Activated CD8-positive, alpha-beta T cell treated with anti-CD3 and anti-CD28 coated beads for 36 hours (primary cell): ENCODE measurements at regions of chr1 and their contacts with region 1.

Region 1: DNA sequence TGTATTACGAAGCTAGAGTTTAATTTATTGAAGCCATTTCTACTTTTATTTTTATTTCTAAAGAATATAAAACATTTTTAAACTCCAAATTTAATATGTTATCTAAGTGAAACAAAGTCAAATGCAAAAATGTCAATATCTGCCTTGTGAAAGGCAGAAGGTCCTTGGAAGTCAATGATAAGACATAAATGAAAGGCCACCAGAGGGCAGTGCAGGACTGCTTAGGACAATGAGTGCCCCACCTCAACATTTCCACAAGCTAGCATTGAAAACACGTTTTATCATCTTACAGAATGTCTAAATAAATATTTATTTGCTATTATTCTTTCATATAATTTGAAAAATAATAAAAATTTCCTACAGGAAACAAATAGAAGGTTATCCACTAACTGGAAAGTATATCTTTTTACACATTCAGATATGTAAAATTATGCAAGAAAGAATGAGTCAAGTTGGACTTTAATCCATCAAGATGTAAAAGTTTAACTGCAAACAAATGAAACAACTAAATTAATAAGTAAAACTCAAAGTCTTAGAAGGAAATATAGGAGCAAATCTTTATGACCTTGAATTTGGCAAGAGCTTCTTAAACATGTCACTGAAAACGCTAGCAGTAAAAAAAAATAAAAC is 140.1 kb upstream of the FMN2 start:
- DNase-seq: peak; percentile 82
- ATAC-seq: no peak
- H3K4me3 Mint-ChIP-seq: no peak overlapping the region
- H3K27ac Mint-ChIP-seq: no peak overlapping the region
- H3K4me1 Mint-ChIP-seq: no peaks in the 10 kb centered on the region
- H3K27me3 Mint-ChIP-seq: no peaks in the 10 kb centered on the region
- CTCF ChIP-seq: peak; percentile 85

Region 2: GRCh38 chr1:239882967-239883366 is 68.7 kb before region 1 on chr1:
- CTCF ChIA-PET with region 1: no interaction called
- POLR2A ChIA-PET with region 1: no interaction called
- intact Hi-C with region 1: no loop called
- DNase-seq: no peak
- ATAC-seq: no peak
- H3K4me3 Mint-ChIP-seq: no peak overlapping the region
- H3K27ac Mint-ChIP-seq: no peak overlapping the region
- H3K4me1 Mint-ChIP-seq: no peaks in the 10 kb centered on the region
- H3K27me3 Mint-ChIP-seq: no peaks in the 10 kb centered on the region
- CTCF ChIP-seq: no peak

Region 3: DNA sequence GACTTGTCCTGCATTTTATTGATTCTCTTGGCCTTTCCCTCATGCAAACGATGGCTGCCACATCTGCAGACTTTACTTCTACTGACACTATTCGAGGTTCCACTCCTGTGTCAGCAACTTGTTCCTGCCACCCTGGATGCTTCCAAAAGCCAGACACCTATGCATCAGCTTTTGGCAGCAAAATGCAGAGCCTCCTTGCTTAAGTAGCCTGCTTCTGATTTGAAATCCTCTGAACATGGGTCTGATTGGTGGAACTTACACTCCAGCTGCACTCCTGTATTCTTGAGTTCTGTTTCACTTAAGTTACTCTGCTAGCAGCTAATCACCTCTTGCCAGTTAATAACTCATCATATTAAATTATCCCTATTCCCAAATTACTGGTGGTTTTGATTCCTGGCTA is 12.0 kb before region 1 on chr1:
- CTCF ChIA-PET with region 1: interaction called, 14 read pairs
- POLR2A ChIA-PET with region 1: no interaction called
- intact Hi-C with region 1: no loop called
- DNase-seq: no peak
- ATAC-seq: no peak
- H3K4me3 Mint-ChIP-seq: no peak overlapping the region
- H3K27ac Mint-ChIP-seq: no peak overlapping the region
- H3K4me1 Mint-ChIP-seq: no peaks in the 10 kb centered on the region
- H3K27me3 Mint-ChIP-seq: peaks cover 2% of the 10 kb centered on the region
- CTCF ChIP-seq: no peak

Region 4: DNA sequence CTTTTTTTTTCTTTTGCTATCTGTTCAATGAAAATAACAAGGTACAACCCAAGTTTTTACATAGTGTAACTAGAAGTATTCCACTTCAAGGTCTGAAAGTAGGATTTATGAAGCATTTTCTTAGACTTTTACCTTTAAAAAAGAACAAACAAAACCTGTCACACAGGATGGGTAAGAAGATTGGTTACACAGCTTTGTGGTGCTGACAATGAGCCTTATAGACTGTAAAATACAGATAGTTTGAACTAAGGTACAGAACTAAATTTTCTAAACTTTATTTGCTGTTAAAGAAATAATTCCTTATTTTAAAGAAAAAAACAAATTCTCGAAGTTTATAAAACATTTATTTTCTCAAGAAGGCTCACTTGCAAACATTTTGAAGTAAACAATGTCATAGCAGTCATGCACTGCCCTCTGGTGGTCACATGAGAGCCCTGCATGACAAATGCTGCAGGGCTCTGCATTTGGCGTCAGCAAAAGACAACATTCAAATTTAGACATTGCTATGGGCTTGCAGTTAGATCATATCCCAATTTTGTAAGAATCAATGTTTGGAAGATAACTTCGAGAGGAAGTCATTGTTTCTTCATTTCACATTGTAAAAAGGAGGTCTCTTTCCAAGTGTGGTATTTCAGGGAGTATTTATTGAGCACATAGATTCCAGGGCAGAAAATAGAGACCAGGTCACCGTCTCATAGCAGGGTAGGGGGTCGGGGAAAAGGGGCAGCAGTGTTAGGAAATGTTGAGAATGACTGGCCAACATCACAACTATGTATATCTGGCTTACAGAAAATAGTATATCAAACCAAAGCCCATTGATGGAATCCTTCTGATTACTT is 24.7 kb after region 1 on chr1:
- CTCF ChIA-PET with region 1: interaction called, 22 read pairs
- POLR2A ChIA-PET with region 1: no interaction called
- intact Hi-C with region 1: loop called (anchors 2 kb)
- DNase-seq: peak; percentile 64
- ATAC-seq: peak; percentile 71
- H3K4me3 Mint-ChIP-seq: no peak overlapping the region
- H3K27ac Mint-ChIP-seq: no peak overlapping the region
- H3K4me1 Mint-ChIP-seq: no peaks in the 10 kb centered on the region
- H3K27me3 Mint-ChIP-seq: peaks cover 5% of the 10 kb centered on the region
- CTCF ChIP-seq: peak; percentile 86

Region 5: GRCh38 chr1:240004086-240004749 is 52.6 kb after region 1 on chr1:
- CTCF ChIA-PET with region 1: interaction called, 26 read pairs
- POLR2A ChIA-PET with region 1: no interaction called
- intact Hi-C with region 1: no loop called
- DNase-seq: peak; percentile 30
- ATAC-seq: peak; percentile 39
- H3K4me3 Mint-ChIP-seq: no peak overlapping the region
- H3K27ac Mint-ChIP-seq: no peak overlapping the region
- H3K4me1 Mint-ChIP-seq: no peaks in the 10 kb centered on the region
- H3K27me3 Mint-ChIP-seq: peaks cover 8% of the 10 kb centered on the region
- CTCF ChIP-seq: peak; percentile 86

Region 6: GRCh38 chr1:240056350-240056749 is 104.7 kb after region 1 on chr1:
- CTCF ChIA-PET with region 1: no interaction called
- POLR2A ChIA-PET with region 1: no interaction called
- intact Hi-C with region 1: no loop called
- DNase-seq: no peak
- ATAC-seq: no peak
- H3K4me3 Mint-ChIP-seq: no peak overlapping the region
- H3K27ac Mint-ChIP-seq: no peak overlapping the region
- H3K4me1 Mint-ChIP-seq: no peaks in the 10 kb centered on the region
- H3K27me3 Mint-ChIP-seq: no peaks in the 10 kb centered on the region
- CTCF ChIP-seq: no peak